ENCODE measurements at regions of chr13 and their contacts with region 1.

Region 1: GRCh38 chr13:78978381-78978998 is 319.5 kb upstream of the OBI1 start:
- DNase-seq: peak; percentile 37
- H3K4me3 ChIP-seq: no peak overlapping the region
- H3K27ac ChIP-seq: no peak overlapping the region
- H3K4me1 ChIP-seq: no peaks in the 10 kb centered on the region
- H3K27me3 ChIP-seq: peaks cover 6% of the 10 kb centered on the region
- CTCF ChIP-seq: peak; percentile 64 to 74

Region 2: GRCh38 chr13:77779552-77780272 is 1198.8 kb before region 1 on chr13:
- CTCF ChIA-PET with region 1: no interaction called
- dilution Hi-C with region 1: no loop called
- in situ Hi-C with region 1: no loop called
- intact Hi-C with region 1: loop called (anchors 5 kb)
- DNase-seq: peak; percentile 22
- H3K4me3 ChIP-seq: no peak overlapping the region
- H3K27ac ChIP-seq: no peak overlapping the region
- H3K4me1 ChIP-seq: no peaks in the 10 kb centered on the region
- H3K27me3 ChIP-seq: no peaks in the 10 kb centered on the region
- CTCF ChIP-seq: peak; percentile 55 to 64

Region 3: GRCh38 chr13:78147905-78148304 is 830.6 kb before region 1 on chr13:
- CTCF ChIA-PET with region 1: no interaction called
- dilution Hi-C with region 1: no loop called
- in situ Hi-C with region 1: loop called in 1 of 2 experiments (anchors 10 kb)
- intact Hi-C with region 1: no loop called
- DNase-seq: peak; percentile 29
- H3K4me3 ChIP-seq: no peak overlapping the region
- H3K27ac ChIP-seq: peak overlapping the region; percentile 14
- H3K4me1 ChIP-seq: peaks cover 9% of the 10 kb centered on the region
- H3K27me3 ChIP-seq: no peaks in the 10 kb centered on the region
- CTCF ChIP-seq: no peak

Region 4: DNA sequence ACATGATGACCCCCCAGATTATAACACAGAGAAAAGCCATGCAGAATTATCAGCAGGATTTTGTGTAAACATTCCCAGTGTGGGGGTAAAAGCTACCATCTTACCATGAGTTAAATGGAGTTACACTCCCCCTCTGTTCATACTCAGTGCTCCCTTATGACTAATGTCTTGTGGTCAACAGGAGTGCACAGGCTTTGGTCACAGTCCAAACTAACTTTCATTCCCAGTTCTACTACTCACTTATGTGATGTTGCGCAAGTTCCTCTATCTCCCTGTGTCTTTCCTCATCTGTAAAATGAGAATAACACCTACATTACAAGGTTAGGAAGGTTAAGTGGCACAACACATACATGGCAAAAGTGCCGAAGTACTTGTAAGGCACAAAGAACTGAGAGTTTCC is 149.7 kb after region 1 on chr13:
- CTCF ChIA-PET with region 1: no interaction called
- dilution Hi-C with region 1: no loop called
- in situ Hi-C with region 1: no loop called
- intact Hi-C with region 1: no loop called
- DNase-seq: peak; percentile 92
- H3K4me3 ChIP-seq: no peak overlapping the region
- H3K27ac ChIP-seq: no peak overlapping the region
- H3K4me1 ChIP-seq: peaks cover 17% of the 10 kb centered on the region
- H3K27me3 ChIP-seq: peaks cover 3% of the 10 kb centered on the region
- CTCF ChIP-seq: no peak